Left cardiac atrium (tissue), 4 donors: ENCODE measurements at regions of chr10 and their contacts with region 1.

Region 1: GRCh38 chr10:32190890-32191491 is 134.8 kb upstream of the KIF5B start:
- DNase-seq: no peak
- ATAC-seq: peak in 1 of 2 donors; percentile 47

Region 2: GRCh38 chr10:31612082-31612481 is 578.9 kb before region 1 on chr10:
- intact Hi-C with region 1: no loop called
- DNase-seq: no peak
- ATAC-seq: no peak

Region 3: GRCh38 chr10:32055813-32056600 is 135.0 kb before region 1 on chr10 and contains the start of gene KIF5B:
- intact Hi-C with region 1: loop called in 1 of 2 experiments (anchors 10 kb)
- DNase-seq: peak; percentile 92
- ATAC-seq: peak; percentile 95 to 96
- total RNA-seq, gene KIF5B: 124 to 133 TPM

Region 4: GRCh38 chr10:32367793-32368453 is 176.9 kb after region 1 on chr10:
- intact Hi-C with region 1: loop called in 1 of 2 experiments (anchors 2 kb)
- DNase-seq: peak; percentile 73
- ATAC-seq: peak in 1 of 2 donors; percentile 51

Region 5: GRCh38 chr10:32413513-32413912 is 222.5 kb after region 1 on chr10:
- intact Hi-C with region 1: no loop called
- DNase-seq: no peak
- ATAC-seq: peak in 1 of 2 donors; percentile 75